Common myeloid progenitor, CD34-positive (primary cell): ENCODE measurements at regions of chr3 and their contacts with region 1.

Region 1: GRCh38 chr3:48635222-48636021 is at the start of gene SLC26A6:
- DNase-seq: peak; percentile 90 to 93 (median 90)
- H3K4me3 ChIP-seq: peak within 1 kb of the TSS; percentile 62 to 93 (median 85)
- H3K27ac ChIP-seq: peak within 1 kb of the TSS in 1 of 2 experiments; percentile 34
- H3K4me1 ChIP-seq: peaks cover 0 to 27% (median 22%) of the 10 kb centered on the region in 4 experiments
- H3K27me3 ChIP-seq: no peaks in the 10 kb centered on the region

Region 2: DNA sequence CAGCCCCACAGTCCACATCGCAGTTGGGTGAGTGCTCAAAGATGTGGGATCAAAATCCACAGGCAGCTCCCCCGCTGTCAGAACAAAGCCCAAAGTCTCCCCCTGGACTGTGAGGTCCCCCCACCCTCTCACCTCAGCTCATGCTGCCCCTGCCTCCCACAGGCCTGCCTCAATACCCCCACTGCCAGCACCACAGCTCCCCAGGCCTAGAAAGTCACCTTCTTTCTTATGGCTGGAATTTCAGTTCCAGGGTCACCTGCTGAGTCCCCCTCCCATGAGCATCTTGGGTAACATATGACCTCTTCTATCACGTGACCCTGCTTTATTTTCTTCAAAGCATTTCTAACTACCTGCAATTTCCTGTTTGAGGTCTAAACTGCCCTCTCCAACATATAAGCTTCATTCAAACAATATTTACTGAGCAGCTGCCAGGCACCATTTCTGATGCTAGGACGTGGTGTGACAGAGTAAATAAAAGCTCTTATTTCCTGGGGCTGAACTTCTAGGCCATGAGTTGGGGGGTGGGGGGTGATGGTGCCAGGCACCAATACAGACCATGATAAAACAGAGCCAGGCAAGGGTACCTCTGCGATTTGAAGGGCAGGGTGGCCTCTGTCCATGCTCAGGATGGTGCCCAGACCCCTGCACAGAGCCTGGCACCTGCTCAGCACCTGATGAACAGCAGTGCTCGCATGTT is 11.4 kb before region 1 on chr3:
- CTCF ChIA-PET with region 1: interaction called, 11 read pairs
- POLR2A ChIA-PET with region 1: no interaction called
- DNase-seq: no peak
- H3K4me3 ChIP-seq: no peak overlapping the region
- H3K27ac ChIP-seq: no peak overlapping the region
- H3K4me1 ChIP-seq: peaks cover 0 to 3% (median 0%) of the 10 kb centered on the region in 4 experiments
- H3K27me3 ChIP-seq: no peaks in the 10 kb centered on the region